Left ventricle myocardium superior (tissue), 1 donor: ENCODE measurements at regions of chr2 and their contacts with region 1.

Region 1: DNA sequence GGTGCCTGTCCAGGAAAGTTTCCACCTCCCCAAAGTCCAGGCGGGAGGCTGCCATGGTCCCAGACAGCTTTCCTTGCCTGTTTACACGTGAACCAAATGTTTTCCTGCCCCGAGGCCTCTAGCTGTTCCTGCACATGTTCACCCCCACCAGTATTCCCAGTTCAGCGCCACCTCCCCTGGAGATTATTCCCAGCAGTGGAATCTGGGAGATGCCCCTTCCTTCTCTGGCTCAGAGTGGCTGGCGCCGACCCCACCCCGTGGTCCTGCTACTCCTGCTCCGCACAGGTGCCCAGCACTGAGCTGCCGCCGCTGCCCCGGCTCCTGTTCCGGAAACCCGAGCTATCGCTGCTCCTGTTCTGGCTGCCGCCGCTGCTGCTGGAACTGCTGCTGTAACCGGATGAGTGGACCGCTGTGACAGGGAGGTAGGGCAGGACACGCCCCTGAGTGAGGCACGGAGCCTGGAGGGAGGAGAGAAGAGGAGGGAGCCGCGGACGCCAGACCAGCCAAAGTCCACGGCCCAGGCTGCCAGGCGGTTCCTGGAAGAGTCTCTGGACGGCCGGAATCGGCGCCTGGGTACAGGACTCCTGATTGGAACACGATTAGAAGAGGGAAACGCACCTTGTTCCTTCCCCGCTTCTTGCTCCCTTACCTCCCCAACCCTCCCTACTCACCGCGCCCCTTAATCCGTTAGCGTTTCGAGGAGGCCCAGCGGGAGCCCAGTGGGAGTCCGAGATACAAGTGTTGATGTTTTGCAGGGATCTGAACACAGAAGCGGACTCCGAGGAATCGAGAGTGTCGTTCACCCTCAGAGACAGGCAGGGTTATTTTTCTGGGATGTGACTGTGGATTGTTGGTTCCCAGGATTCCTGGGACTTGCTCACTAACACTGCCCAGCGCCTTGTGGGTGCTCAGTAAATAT is at the start of gene PDE11A:
- DNase-seq: peak; percentile 86
- ATAC-seq: peak; percentile 98
- total RNA-seq, gene PDE11A: 4.4 TPM

Region 2: GRCh38 chr2:177799531-177799930 is 273.1 kb before region 1 on chr2:
- intact Hi-C with region 1: loop called (anchors 5 kb)
- DNase-seq: no peak
- ATAC-seq: peak; percentile 32